CD8-positive, alpha-beta T cell (primary cell): ENCODE measurements at regions of chr3 and their contacts with region 1.

Region 1: DNA sequence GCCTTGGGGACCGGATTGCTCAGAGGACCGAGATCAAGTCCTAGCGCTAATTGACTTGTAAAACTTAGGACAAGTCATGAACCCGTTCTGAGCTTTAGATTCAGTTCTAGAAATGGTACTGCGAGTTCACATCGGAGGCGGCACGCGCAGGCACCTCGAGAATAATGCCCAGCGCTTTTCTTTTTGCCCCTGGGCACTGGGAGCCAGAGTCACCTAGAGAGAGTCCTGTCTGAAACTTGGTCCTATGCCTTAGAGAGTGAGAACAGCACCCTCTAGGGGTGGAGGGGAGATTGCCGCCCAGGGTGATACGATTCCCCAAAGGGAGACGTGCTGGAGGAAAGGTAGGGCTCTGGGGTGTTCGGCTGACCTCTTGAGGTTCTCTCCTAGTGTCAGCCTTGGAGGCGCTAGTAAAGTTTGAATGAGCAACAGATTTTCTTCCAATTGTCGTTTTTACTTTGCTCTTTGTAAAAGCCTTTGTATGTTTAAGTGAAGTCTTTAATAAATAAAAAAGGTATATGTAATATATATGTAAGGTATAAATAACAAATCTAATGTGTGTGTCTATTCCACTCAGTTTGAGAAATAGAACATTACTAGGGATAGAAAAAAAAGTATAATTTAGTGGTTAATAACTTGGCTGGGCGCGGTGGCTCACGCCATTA is 826 bp downstream of the EEF1AKMT4 start:
- DNase-seq: peak; percentile 78 to 92 (median 89)
- ATAC-seq: peak; percentile 57
- H3K4me3 ChIP-seq: peak overlapping the region; percentile 98 to 99
- H3K4me3 Mint-ChIP-seq: peak overlapping the region; percentile 93
- H3K27ac ChIP-seq: peak overlapping the region; percentile 28 to 81
- H3K27ac Mint-ChIP-seq: peak overlapping the region; percentile 90
- H3K4me1 ChIP-seq: peaks cover 10% of the 10 kb centered on the region
- H3K4me1 Mint-ChIP-seq: peaks cover 10% of the 10 kb centered on the region
- H3K27me3 ChIP-seq: no peaks in the 10 kb centered on the region
- H3K27me3 Mint-ChIP-seq: no peaks in the 10 kb centered on the region
- CTCF ChIP-seq: peak; percentile 85

Region 2: GRCh38 chr3:182792901-182793662 is 1457.2 kb before region 1 on chr3 and contains the start of gene ATP11B:
- CTCF ChIA-PET with region 1: no interaction called
- POLR2A ChIA-PET with region 1: no interaction called
- intact Hi-C with region 1: loop called in 1 of 2 experiments (anchors 10 kb)
- DNase-seq: peak; percentile 69 to 91 (median 81)
- ATAC-seq: peak; percentile 73
- H3K4me3 ChIP-seq: peak within 1 kb of the TSS; percentile 86 to 96
- H3K4me3 Mint-ChIP-seq: peak within 1 kb of the TSS; percentile 99
- H3K27ac ChIP-seq: peak within 1 kb of the TSS; percentile 90 to 98
- H3K27ac Mint-ChIP-seq: peak within 1 kb of the TSS; percentile 100
- H3K4me1 ChIP-seq: peaks cover 22% of the 10 kb centered on the region
- H3K4me1 Mint-ChIP-seq: peaks cover 32% of the 10 kb centered on the region
- H3K27me3 ChIP-seq: no peaks in the 10 kb centered on the region
- H3K27me3 Mint-ChIP-seq: peaks cover 2% of the 10 kb centered on the region
- CTCF ChIP-seq: no peak
- total RNA-seq, gene ATP11B: 122 to 125 TPM

Region 3: GRCh38 chr3:184017672-184018423 is 232.4 kb before region 1 on chr3 and contains the start of gene ABCC5:
- CTCF ChIA-PET with region 1: interaction called, 3 read pairs
- POLR2A ChIA-PET with region 1: no interaction called
- intact Hi-C with region 1: loop called (anchors 2 to 5 kb)
- DNase-seq: peak; percentile 60 to 91 (median 80)
- ATAC-seq: peak; percentile 94
- H3K4me3 ChIP-seq: peak within 1 kb of the TSS; percentile 94 to 98
- H3K4me3 Mint-ChIP-seq: peak within 1 kb of the TSS; percentile 99
- H3K27ac ChIP-seq: peak within 1 kb of the TSS; percentile 51 to 56
- H3K27ac Mint-ChIP-seq: peak within 1 kb of the TSS; percentile 83
- H3K4me1 ChIP-seq: peaks cover 11% of the 10 kb centered on the region
- H3K4me1 Mint-ChIP-seq: peaks cover 32% of the 10 kb centered on the region
- H3K27me3 ChIP-seq: no peaks in the 10 kb centered on the region
- H3K27me3 Mint-ChIP-seq: peaks cover 12% of the 10 kb centered on the region
- CTCF ChIP-seq: peak; percentile 76
- total RNA-seq, gene ABCC5: 7.4 to 8.3 TPM

Region 4: DNA sequence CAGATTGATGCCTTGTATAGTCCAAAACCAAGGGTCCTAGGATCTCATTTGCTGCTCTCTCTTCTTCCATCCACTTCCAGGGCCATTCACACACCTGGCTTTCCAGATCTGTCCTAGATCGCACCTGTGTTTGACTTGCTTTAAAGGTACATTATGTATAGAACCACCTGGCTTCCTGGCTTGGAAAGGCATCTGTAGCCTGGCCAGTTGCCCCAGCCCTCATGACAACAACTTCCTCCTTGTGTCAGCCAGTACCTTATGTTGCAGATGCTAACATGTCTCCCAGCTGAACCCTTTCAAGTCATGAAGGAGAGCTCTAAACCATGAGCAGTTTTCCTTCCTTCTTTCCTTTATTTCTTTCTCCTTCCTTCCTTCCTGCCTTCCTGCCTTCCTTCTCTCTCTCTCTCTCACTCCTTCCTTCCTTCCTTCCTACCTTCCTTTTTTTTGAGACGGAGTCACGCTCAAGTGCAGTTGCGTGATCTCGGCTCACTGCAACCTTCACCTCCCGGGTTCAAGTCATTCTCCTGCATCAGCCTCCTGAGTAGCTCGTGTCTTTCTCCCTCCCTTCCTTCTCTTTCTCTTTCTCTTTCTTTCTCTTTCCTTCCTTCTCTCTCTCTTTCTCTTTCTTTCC is 200.0 kb before region 1 on chr3:
- CTCF ChIA-PET with region 1: no interaction called
- POLR2A ChIA-PET with region 1: no interaction called
- intact Hi-C with region 1: no loop called
- DNase-seq: no peak
- ATAC-seq: no peak
- H3K4me3 ChIP-seq: no peak overlapping the region
- H3K4me3 Mint-ChIP-seq: no peak overlapping the region
- H3K27ac ChIP-seq: no peak overlapping the region
- H3K27ac Mint-ChIP-seq: no peak overlapping the region
- H3K4me1 ChIP-seq: no peaks in the 10 kb centered on the region
- H3K4me1 Mint-ChIP-seq: no peaks in the 10 kb centered on the region
- H3K27me3 ChIP-seq: no peaks in the 10 kb centered on the region
- H3K27me3 Mint-ChIP-seq: peaks cover 13% of the 10 kb centered on the region
- CTCF ChIP-seq: no peak

Region 5: GRCh38 chr3:184145111-184145524 is 105.2 kb before region 1 on chr3:
- CTCF ChIA-PET with region 1: interaction called, 11 read pairs
- POLR2A ChIA-PET with region 1: no interaction called
- intact Hi-C with region 1: loop called in 1 of 2 experiments (anchors 1 kb)
- DNase-seq: peak in 5 of 9 experiments; percentile 34 to 64 (median 40)
- ATAC-seq: peak; percentile 74
- H3K4me3 ChIP-seq: no peak overlapping the region
- H3K4me3 Mint-ChIP-seq: no peak overlapping the region
- H3K27ac ChIP-seq: no peak overlapping the region
- H3K27ac Mint-ChIP-seq: peak overlapping the region; percentile 41
- H3K4me1 ChIP-seq: no peaks in the 10 kb centered on the region
- H3K4me1 Mint-ChIP-seq: no peaks in the 10 kb centered on the region
- H3K27me3 ChIP-seq: no peaks in the 10 kb centered on the region
- H3K27me3 Mint-ChIP-seq: no peaks in the 10 kb centered on the region
- CTCF ChIP-seq: no peak

Region 6: DNA sequence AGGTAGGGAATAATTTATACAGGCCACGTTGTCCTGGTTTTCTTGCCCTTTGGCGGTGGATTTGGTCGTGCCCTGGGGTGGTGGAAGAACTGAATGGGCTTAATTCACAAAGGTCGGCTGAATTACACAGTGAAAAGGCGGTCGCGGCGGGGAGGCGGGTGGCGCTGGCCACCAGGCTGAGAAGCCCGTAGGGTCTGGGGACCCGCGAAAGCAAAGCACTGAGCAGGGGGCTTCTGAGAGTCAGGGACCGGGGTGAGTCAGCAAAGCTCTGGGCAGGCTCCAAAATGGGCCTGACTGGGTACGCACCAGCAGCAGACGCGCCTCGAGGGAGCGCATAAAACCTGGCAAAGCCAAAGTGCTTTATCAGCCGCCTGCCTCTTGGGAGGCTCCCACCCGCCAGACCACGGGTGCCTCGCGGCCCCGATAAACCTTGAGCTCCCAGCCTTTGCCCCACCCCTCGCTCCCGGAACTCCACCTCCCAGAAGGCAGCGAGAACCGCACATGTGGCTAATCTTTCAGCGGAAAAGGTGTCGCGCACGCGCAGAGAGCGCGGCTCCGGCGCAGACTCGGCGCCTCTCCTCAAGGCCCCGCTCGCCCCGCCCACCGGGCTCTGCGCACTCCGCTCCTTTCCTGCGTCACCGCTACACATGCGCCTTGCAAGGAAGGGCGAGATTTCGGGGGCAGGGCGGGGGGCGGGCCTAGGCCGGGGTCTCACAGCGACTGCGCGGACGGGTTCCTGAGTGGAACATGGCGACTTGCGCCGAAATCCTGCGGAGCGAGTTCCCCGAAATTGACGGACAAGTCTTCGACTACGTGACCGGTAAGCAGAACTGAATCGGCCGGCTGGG is 64.6 kb before region 1 on chr3 and contains the start of gene ABCF3:
- CTCF ChIA-PET with region 1: no interaction called
- POLR2A ChIA-PET with region 1: no interaction called
- intact Hi-C with region 1: loop called (anchors 1 kb)
- DNase-seq: peak; percentile 98 to 100 (median 99)
- ATAC-seq: peak; percentile 97
- H3K4me3 ChIP-seq: peak within 1 kb of the TSS; percentile 95 to 98
- H3K4me3 Mint-ChIP-seq: peak within 1 kb of the TSS; percentile 98
- H3K27ac ChIP-seq: peak within 1 kb of the TSS; percentile 82 to 83
- H3K27ac Mint-ChIP-seq: peak within 1 kb of the TSS; percentile 96
- H3K4me1 ChIP-seq: peaks cover 26% of the 10 kb centered on the region
- H3K4me1 Mint-ChIP-seq: peaks cover 42% of the 10 kb centered on the region
- H3K27me3 ChIP-seq: no peaks in the 10 kb centered on the region
- H3K27me3 Mint-ChIP-seq: no peaks in the 10 kb centered on the region
- CTCF ChIP-seq: no peak
- total RNA-seq, gene ABCF3: 192 to 193 TPM

Region 7: GRCh38 chr3:184298759-184299496 is 48.6 kb after region 1 on chr3 and contains the start of gene PSMD2:
- CTCF ChIA-PET with region 1: interaction called, 4 read pairs
- POLR2A ChIA-PET with region 1: no interaction called
- intact Hi-C with region 1: loop called (anchors 1 kb)
- DNase-seq: peak; percentile 96 to 99 (median 98)
- ATAC-seq: peak; percentile 93
- H3K4me3 ChIP-seq: peak within 1 kb of the TSS; percentile 74 to 89
- H3K4me3 Mint-ChIP-seq: peak within 1 kb of the TSS; percentile 93
- H3K27ac ChIP-seq: peak within 1 kb of the TSS; percentile 64 to 70
- H3K27ac Mint-ChIP-seq: peak within 1 kb of the TSS; percentile 91
- H3K4me1 ChIP-seq: peaks cover 10% of the 10 kb centered on the region
- H3K4me1 Mint-ChIP-seq: peaks cover 32% of the 10 kb centered on the region
- H3K27me3 ChIP-seq: no peaks in the 10 kb centered on the region
- H3K27me3 Mint-ChIP-seq: no peaks in the 10 kb centered on the region
- CTCF ChIP-seq: no peak
- total RNA-seq, gene PSMD2: 168 to 174 TPM

Region 8: GRCh38 chr3:184362668-184363540 is 112.6 kb after region 1 on chr3:
- CTCF ChIA-PET with region 1: no interaction called
- POLR2A ChIA-PET with region 1: no interaction called
- intact Hi-C with region 1: loop called in 1 of 2 experiments (anchors 1 kb)
- DNase-seq: peak; percentile 81 to 98 (median 93)
- ATAC-seq: peak; percentile 71
- H3K4me3 ChIP-seq: peak overlapping the region; percentile 62 to 93
- H3K4me3 Mint-ChIP-seq: peak overlapping the region; percentile 98
- H3K27ac ChIP-seq: peak overlapping the region; percentile 74 to 87
- H3K27ac Mint-ChIP-seq: peak overlapping the region; percentile 93
- H3K4me1 ChIP-seq: peaks cover 15% of the 10 kb centered on the region
- H3K4me1 Mint-ChIP-seq: peaks cover 30% of the 10 kb centered on the region
- H3K27me3 ChIP-seq: no peaks in the 10 kb centered on the region
- H3K27me3 Mint-ChIP-seq: no peaks in the 10 kb centered on the region
- CTCF ChIP-seq: peak; percentile 13